Left ventricle myocardium inferior (tissue), 1 donor: ENCODE measurements at regions of chr1 and their contacts with region 1.

Region 1: DNA sequence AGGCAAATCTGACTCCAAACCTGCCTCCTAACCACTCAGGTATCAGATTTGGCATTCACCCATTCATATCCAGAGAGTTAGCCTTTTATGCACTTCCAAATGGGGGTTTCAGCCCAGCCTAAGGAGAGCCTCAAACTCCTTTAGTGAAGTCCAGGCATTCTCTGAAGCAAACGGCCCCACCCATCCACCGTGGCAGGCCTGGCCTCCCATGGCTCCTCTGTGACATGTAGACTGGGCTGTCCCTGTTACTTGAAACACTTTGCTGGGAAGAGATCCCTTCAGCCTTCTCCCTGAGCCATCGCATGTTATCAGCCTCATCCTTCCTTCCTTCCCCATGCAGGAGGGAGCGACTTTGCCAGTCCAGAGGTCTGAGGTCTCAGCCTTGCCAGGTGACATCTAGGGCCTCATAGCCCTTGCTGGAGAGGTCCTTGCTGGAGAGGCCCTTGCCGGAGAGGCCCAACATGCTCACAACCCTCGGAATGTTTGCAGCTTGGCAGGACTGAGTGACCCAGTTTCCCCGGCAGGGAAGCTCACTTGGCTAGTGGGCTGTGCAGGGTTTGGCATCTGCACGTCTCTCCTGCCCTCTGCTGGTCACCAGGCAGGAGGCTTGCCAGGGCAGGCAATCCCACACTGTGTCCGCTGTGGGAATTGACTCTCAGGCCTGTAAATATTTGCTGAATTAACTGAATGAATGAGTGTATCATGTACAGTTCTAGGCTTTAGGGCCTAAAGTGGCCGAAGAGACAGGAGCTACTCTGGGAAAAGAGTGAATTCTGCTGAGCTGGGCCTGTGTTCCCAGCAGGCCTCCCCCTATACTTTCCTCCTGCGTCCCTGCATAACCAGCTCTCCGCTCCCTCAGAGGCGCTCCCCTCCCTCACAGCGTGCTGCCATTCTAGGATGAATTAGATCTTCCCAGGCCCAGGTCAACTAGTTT is 26.7 kb upstream of the RBM15 start:
- DNase-seq: peak; percentile 80
- H3K4me3 ChIP-seq: no peak overlapping the region
- H3K27ac ChIP-seq: no peak overlapping the region
- H3K4me1 ChIP-seq: peaks cover 51% of the 10 kb centered on the region
- H3K27me3 ChIP-seq: no peaks in the 10 kb centered on the region
- CTCF ChIP-seq: peak; percentile 96

Region 2: GRCh38 chr1:109947582-109948286 is 364.7 kb before region 1 on chr1:
- intact Hi-C with region 1: no loop called
- DNase-seq: no peak
- H3K4me3 ChIP-seq: no peak overlapping the region
- H3K27ac ChIP-seq: peak overlapping the region; percentile 31
- H3K4me1 ChIP-seq: peaks cover 10% of the 10 kb centered on the region
- H3K27me3 ChIP-seq: no peaks in the 10 kb centered on the region
- CTCF ChIP-seq: no peak

Region 3: DNA sequence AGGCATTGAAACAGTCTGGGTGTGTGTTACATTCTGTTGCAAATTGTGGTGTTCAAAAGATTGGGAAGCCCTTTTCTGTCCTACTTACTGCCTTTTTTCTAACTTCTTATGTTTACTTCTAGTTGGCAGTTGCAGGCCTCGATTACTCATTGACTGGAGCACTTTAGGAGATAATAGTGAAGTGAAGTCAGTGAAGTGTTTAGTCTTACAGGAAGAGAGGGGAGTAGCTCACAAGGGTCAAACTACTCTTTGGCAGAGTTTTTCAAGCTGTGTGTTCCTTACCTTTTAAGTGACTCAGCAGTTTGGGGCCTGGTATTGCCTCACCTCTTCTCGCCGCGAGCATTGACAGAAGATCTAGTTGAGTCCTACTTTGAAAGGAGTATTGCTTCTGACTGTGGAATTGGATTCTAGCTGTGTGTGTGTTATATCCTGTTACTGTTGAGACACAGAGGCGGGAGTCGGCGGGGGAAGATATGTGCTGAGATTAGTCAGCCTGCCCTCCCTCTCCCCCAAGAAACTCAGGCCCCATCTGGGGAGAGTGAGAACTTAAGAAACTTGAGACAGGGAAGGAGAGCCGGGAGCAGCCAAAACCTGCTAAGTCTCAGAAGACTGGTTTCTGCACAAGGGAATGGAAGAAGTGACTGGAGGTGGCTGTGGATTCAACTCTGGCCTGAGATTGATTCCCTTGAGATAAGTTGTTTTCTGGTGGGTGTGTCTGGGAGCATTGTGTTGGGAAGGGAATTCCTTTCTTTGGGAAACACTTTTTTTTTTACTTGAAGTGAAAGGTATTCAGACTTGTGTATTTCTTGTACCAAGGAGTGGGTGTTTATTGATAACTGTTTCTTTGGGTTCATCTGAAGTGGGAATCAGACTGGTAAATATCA is 308.5 kb before region 1 on chr1:
- intact Hi-C with region 1: no loop called
- DNase-seq: peak; percentile 51
- H3K4me3 ChIP-seq: peak overlapping the region; percentile 40
- H3K27ac ChIP-seq: peak overlapping the region; percentile 82
- H3K4me1 ChIP-seq: peaks cover 81% of the 10 kb centered on the region
- H3K27me3 ChIP-seq: no peaks in the 10 kb centered on the region
- CTCF ChIP-seq: no peak

Region 4: DNA sequence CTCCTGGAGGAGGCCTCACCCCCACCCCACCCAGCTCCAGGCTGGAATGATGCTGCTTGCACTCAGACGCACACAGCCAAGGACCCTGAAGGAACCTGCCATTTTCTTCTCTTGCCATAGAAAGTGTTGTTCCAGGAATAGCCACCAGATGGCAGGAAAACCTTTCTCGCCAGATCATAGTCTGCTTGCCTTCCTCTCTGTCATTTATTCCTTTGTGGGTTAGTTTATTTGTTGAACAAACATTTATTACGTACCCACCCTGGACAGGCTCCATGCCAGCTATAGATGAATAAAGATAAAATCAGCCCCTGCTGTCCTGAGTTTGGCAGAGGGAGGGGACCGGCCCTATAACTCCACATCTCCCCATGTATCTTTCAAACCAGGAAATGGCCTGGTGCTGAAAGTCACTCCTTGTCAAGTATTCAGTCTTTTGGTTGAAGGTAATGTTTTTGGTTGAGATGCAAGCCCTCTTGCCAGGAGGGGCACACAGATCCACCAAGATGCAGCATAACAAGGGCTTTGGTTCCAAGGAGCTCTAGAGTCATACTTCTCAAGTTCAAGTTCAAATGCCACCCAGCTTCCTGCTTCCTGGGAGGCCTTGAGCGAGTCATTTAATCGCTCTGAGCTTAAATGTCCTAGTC is 109.3 kb before region 1 on chr1:
- intact Hi-C with region 1: loop called (anchors 2 kb)
- DNase-seq: no peak
- H3K4me3 ChIP-seq: no peak overlapping the region
- H3K27ac ChIP-seq: no peak overlapping the region
- H3K4me1 ChIP-seq: no peaks in the 10 kb centered on the region
- H3K27me3 ChIP-seq: no peaks in the 10 kb centered on the region
- CTCF ChIP-seq: peak; percentile 91

Region 5: GRCh38 chr1:110209715-110210603 is 102.5 kb before region 1 on chr1 and contains the start of gene KCNC4:
- intact Hi-C with region 1: loop called (anchors 2 kb)
- DNase-seq: peak; percentile 92
- H3K4me3 ChIP-seq: peak within 1 kb of the TSS; percentile 82
- H3K27ac ChIP-seq: peak within 1 kb of the TSS; percentile 88
- H3K4me1 ChIP-seq: peaks cover 55% of the 10 kb centered on the region
- H3K27me3 ChIP-seq: peaks cover 14% of the 10 kb centered on the region
- CTCF ChIP-seq: peak; percentile 19
- total RNA-seq, gene KCNC4: 6.1 TPM

Region 6: GRCh38 chr1:110487726-110488125 is 175.3 kb after region 1 on chr1:
- intact Hi-C with region 1: no loop called
- DNase-seq: no peak
- H3K4me3 ChIP-seq: no peak overlapping the region
- H3K27ac ChIP-seq: no peak overlapping the region
- H3K4me1 ChIP-seq: peaks cover 24% of the 10 kb centered on the region
- H3K27me3 ChIP-seq: no peaks in the 10 kb centered on the region
- CTCF ChIP-seq: no peak